ENCODE measurements at regions of chr6 and their contacts with region 1.

Region 1: GRCh38 chr6:107459283-107460082 is at the start of gene PDSS2:
- DNase-seq: peak; percentile 100
- H3K4me3 Mint-ChIP-seq: peak within 1 kb of the TSS; percentile 80
- H3K27ac Mint-ChIP-seq: peak within 1 kb of the TSS; percentile 87
- H3K4me1 Mint-ChIP-seq: peaks cover 19% of the 10 kb centered on the region
- H3K27me3 Mint-ChIP-seq: no peaks in the 10 kb centered on the region
- total RNA-seq, gene PDSS2: 10.5 to 11.3 TPM

Region 2: DNA sequence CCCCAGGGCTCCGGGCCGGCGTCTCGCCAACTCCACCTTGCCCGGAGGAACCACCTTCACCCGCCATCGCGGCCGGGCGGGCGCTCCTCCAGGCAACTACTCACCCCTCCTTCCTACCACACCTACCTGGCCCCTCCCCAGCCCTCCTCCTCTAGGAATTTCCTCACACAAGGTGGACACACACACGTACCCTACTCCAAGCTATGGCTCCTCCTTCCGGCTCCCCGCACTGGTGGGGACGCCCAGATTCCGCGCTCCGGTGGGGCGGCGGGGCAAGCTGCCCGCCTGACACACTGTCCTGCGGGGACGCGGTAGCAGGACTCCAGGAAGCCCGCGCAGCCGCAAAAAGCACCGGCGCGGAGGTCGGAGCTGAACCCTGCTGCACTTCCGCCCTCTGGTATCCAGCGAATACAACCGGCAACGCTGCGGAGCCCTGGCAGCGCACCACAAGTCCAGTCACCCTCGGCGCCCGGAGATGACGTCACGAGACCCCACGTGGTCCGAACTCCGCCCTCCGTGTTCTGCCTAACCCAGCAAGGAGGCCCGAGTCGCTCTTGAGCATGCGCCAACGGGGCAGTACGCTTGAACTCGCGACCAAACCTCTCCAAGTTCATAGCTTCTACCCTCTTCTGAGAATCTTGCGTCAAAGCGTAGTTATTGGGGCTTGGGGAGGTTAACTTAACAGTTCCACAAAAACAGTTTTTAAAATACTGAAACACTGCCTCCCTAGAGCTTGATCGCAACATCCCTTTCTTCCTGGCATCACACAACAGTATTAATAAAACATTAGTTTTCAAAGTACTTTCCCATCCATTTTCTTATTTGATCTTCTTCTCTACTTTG is 1133.9 kb before region 1 on chr6 and contains the start of gene ATG5:
- CTCF ChIA-PET with region 1: interaction called, 3 read pairs
- intact Hi-C with region 1: loop called (anchors 1 kb)
- DNase-seq: peak; percentile 100
- H3K4me3 Mint-ChIP-seq: peak within 1 kb of the TSS; percentile 99
- H3K27ac Mint-ChIP-seq: peak within 1 kb of the TSS; percentile 89
- H3K4me1 Mint-ChIP-seq: peaks cover 39% of the 10 kb centered on the region
- H3K27me3 Mint-ChIP-seq: no peaks in the 10 kb centered on the region
- total RNA-seq, gene ATG5: 20.2 to 20.7 TPM

Region 3: GRCh38 chr6:107114213-107114905 is 345.1 kb before region 1 on chr6:
- CTCF ChIA-PET with region 1: no interaction called
- intact Hi-C with region 1: loop called (anchors 1 kb)
- DNase-seq: peak; percentile 62
- H3K4me3 Mint-ChIP-seq: peak overlapping the region; percentile 77
- H3K27ac Mint-ChIP-seq: peak overlapping the region; percentile 66
- H3K4me1 Mint-ChIP-seq: peaks cover 16% of the 10 kb centered on the region
- H3K27me3 Mint-ChIP-seq: peaks cover 9% of the 10 kb centered on the region

Region 4: GRCh38 chr6:107330168-107330567 is 129.3 kb before region 1 on chr6:
- CTCF ChIA-PET with region 1: no interaction called
- intact Hi-C with region 1: loop called (anchors 2 kb)
- DNase-seq: peak; percentile 68
- H3K4me3 Mint-ChIP-seq: peak overlapping the region; percentile 33
- H3K27ac Mint-ChIP-seq: peak overlapping the region; percentile 61
- H3K4me1 Mint-ChIP-seq: peaks cover 13% of the 10 kb centered on the region
- H3K27me3 Mint-ChIP-seq: no peaks in the 10 kb centered on the region

Region 5: GRCh38 chr6:107618672-107619071 is 159.2 kb after region 1 on chr6:
- CTCF ChIA-PET with region 1: no interaction called
- intact Hi-C with region 1: loop called (anchors 1 kb)
- DNase-seq: peak; percentile 72
- H3K4me3 Mint-ChIP-seq: no peak overlapping the region
- H3K27ac Mint-ChIP-seq: peak overlapping the region; percentile 28
- H3K4me1 Mint-ChIP-seq: peaks cover 17% of the 10 kb centered on the region
- H3K27me3 Mint-ChIP-seq: no peaks in the 10 kb centered on the region

Region 6: DNA sequence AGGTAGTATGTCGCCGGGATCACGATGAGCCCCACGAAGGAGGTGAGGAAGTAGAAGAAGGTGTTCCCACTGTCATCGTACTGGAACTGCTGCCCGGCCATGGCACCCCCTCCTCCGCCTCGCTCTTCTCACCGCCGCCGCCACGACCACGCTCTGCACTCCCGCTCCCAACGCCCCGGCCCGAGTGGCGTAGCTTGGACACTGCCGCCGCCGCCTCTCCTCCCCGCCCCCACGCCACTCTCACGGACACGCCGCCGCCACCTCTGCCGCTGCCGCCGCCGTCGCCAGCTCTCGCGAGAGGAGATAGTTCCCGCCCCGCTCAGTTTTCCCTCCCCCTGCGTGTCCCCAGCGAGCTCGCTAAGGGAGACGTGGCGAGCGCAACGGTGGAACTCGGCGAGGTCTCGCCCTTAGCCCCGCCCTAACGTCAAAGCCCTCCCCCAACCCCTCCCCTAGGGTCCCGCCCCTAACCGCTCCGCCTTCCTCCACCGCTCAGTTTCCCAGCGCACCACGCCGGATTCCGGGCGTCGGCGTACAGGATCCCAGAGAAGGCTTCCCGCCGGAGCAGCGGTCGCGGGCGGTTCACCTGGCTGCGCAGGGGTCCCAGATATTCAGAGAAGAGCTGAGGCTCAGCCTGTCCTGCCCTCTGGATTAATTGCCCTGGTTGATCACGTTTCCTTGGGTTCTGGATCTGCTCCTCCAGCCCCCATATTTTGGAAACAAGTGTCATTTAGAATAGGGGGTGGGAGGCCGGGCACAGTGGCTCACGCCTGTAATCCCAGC is 498.6 kb after region 1 on chr6 and contains the start of gene SEC63:
- CTCF ChIA-PET with region 1: no interaction called
- intact Hi-C with region 1: loop called (anchors 1 kb)
- DNase-seq: peak; percentile 98
- H3K4me3 Mint-ChIP-seq: peak within 1 kb of the TSS; percentile 97
- H3K27ac Mint-ChIP-seq: peak within 1 kb of the TSS; percentile 94
- H3K4me1 Mint-ChIP-seq: peaks cover 32% of the 10 kb centered on the region
- H3K27me3 Mint-ChIP-seq: no peaks in the 10 kb centered on the region
- total RNA-seq, gene SEC63: 78.3 to 86.5 TPM

Region 7: DNA sequence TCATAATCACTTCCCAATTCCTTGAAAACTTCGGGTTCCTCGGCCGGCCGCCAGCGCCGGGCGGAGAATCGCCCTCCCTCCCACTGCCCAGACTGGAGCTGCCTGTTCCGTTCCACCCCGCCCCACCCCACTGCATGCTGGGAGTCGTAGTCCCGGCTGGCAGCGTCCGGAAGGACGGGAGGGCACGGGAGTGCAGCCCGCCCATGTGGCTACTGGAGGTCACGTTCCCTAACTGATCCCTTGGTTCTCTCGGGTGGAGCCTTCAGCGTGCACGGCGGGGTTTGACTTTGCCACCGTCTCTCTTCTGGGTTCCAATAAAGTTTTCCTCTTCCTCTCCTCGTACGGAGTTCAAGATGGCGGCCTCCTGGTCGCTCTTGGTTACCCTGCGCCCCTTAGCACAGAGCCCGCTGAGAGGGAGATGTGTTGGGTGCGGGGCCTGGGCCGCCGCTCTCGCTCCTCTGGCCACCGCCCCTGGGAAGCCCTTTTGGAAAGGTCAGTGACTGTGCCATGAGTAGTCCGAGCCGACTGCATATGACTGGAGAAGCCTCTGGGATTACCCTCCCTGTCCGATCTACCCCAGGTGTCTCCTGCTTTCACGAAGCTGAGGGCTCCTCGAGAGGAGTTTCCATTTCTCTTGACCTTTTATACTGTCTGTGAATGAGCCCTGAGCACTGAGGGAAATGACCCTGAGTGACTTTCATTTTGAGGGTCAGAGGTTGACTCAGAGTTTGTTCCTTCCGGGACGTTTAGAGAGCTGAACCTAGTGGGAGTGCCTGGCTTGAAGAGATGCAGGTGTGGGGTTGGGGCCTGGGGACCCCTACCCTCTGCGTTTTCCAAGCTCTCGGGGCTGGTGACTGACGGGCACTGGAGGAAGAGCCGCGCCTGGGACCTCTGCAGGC is 835.5 kb after region 1 on chr6 and contains the start of gene AFG1L:
- CTCF ChIA-PET with region 1: no interaction called
- intact Hi-C with region 1: loop called (anchors 10 kb)
- DNase-seq: peak; percentile 91
- H3K4me3 Mint-ChIP-seq: peak within 1 kb of the TSS; percentile 99
- H3K27ac Mint-ChIP-seq: peak within 1 kb of the TSS; percentile 100
- H3K4me1 Mint-ChIP-seq: peaks cover 19% of the 10 kb centered on the region
- H3K27me3 Mint-ChIP-seq: no peaks in the 10 kb centered on the region
- total RNA-seq, gene AFG1L: 5.4 to 5.9 TPM